Transverse colon (tissue), 4 donors: ENCODE measurements at regions of chr3 and their contacts with region 1.

Region 1: DNA sequence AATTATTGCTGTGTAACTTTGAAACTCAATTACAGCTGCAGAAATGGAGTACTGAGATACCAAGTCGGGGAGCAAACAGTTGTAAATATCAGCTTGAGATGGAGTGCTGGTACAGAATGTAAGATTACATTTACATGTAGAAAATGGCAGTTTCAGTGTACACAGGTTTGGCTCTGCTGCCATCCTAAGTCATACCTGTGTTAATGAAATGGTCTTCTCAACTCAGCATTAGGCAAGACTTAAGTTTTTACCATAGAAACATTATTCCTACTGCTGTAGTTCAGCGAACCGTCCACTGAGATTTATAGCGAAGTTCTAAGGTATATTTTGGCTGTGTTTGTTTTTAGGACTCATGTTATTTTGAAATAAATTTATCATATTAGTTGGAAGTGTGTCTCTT is 110.1 kb upstream of the TBL1XR1 start:
- DNase-seq: no peak
- H3K4me3 ChIP-seq: no peak overlapping the region
- H3K27ac ChIP-seq: no peak overlapping the region
- H3K4me1 ChIP-seq: peaks cover 0 to 16% (median 3%) of the 10 kb centered on the region in 4 donors
- H3K27me3 ChIP-seq: no peaks in the 10 kb centered on the region
- CTCF ChIP-seq: no peak
- EP300 ChIP-seq: no peak
- POLR2A ChIP-seq: no peak

Region 2: GRCh38 chr3:176447369-176447768 is 860.0 kb before region 1 on chr3:
- in situ Hi-C with region 1: no loop called
- intact Hi-C with region 1: no loop called
- DNase-seq: no peak
- H3K4me3 ChIP-seq: no peak overlapping the region
- H3K27ac ChIP-seq: no peak overlapping the region
- H3K4me1 ChIP-seq: no peaks in the 10 kb centered on the region
- H3K27me3 ChIP-seq: no peaks in the 10 kb centered on the region
- CTCF ChIP-seq: no peak
- EP300 ChIP-seq: no peak
- POLR2A ChIP-seq: no peak

Region 3: GRCh38 chr3:177320765-177321247 is 13.4 kb after region 1 on chr3:
- in situ Hi-C with region 1: no loop called
- intact Hi-C with region 1: loop called (anchors 1 kb)
- DNase-seq: no peak
- H3K4me3 ChIP-seq: no peak overlapping the region
- H3K27ac ChIP-seq: no peak overlapping the region
- H3K4me1 ChIP-seq: peaks cover 0 to 14% (median 8%) of the 10 kb centered on the region in 4 donors
- H3K27me3 ChIP-seq: no peaks in the 10 kb centered on the region
- CTCF ChIP-seq: no peak
- EP300 ChIP-seq: no peak
- POLR2A ChIP-seq: no peak